ENCODE measurements at regions of chr3 and their contacts with region 1.

Region 1: DNA sequence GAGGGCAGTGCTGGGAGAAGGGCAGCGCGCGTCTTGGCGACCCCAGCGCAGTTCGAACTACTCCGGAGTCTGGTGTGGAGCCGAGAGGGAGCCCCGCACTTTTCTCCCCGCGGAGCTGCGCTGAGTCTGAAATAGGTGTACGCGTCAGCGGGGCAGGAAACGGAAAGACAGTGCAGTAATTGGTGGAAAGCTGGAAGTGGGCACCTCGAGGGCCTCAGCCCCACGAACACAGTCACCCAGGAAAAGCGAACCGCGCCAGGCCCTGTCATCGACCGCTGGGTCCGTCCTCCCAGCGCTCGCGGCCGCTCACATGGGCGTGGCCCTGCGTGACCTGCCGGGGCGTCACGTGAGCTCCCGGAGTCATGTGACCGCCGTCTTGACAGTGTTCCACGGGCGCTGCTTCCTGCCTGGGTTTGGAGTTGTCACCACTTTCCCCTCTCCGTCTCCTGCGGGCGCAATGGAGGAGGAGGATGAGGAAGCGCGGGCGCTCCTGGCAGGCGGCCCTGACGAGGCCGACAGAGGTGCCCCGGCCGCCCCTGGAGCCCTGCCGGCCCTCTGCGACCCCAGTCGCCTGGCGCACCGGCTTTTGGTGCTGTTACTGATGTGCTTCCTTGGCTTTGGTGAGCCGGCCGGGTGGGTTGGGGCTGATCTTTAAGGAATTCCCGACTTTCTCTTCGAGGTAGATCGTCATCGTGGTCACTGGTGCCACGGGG is at the start of gene MFSD1:
- DNase-seq: peak; percentile 86
- ATAC-seq: peak; percentile 88
- H3K4me3 Mint-ChIP-seq: peak within 1 kb of the TSS; percentile 90
- H3K27ac Mint-ChIP-seq: no peak within 1 kb of the TSS
- H3K4me1 Mint-ChIP-seq: peaks cover 8% of the 10 kb centered on the region
- H3K27me3 Mint-ChIP-seq: peaks cover 38% of the 10 kb centered on the region
- CTCF ChIP-seq: no peak
- total RNA-seq, gene MFSD1: 6.6 to 8.2 TPM (median 6.7 TPM) in 3 replicates

Region 2: GRCh38 chr3:158790901-158791589 is 10.8 kb before region 1 on chr3:
- CTCF ChIA-PET with region 1: interaction called, 17 read pairs
- POLR2A ChIA-PET with region 1: no interaction called
- DNase-seq: no peak
- ATAC-seq: peak; percentile 65
- H3K4me3 Mint-ChIP-seq: no peak overlapping the region
- H3K27ac Mint-ChIP-seq: no peak overlapping the region
- H3K4me1 Mint-ChIP-seq: no peaks in the 10 kb centered on the region; the same call in 1 of the 2 replicates
- H3K27me3 Mint-ChIP-seq: peaks cover 2% of the 10 kb centered on the region
- CTCF ChIP-seq: peak; percentile 11